Mammary epithelial cell (primary cell): ENCODE measurements at regions of chr12 and their contacts with region 1.

Region 1: GRCh38 chr12:110431957-110432587 is 18.1 kb downstream of the ARPC3 start:
- DNase-seq: no peak
- H3K4me3 ChIP-seq: no peak overlapping the region
- H3K27ac ChIP-seq: no peak overlapping the region
- H3K4me1 ChIP-seq: no peaks in the 10 kb centered on the region
- H3K27me3 ChIP-seq: no peaks in the 10 kb centered on the region
- CTCF ChIP-seq: no peak

Region 2: DNA sequence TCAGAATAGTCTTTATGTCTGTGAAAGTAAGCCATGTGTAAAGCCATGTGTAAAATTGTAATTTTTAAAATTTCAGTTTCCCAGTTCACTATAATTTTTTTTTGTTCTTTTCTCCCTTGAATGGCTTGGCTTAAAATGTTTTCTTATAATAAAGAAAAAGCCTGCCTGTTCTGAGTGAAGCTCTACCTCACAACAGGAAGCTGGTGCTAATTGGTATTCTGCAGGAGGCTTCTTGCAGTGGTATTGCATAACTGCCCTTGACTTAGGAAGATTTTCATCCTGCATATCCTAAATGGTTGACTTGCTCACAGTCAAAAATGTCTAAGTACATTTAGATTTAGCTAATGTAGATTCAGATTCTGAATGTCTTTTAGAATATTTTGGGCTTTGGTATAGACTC is 101.5 kb before region 1 on chr12:
- CTCF ChIA-PET with region 1: interaction called, 18 read pairs
- dilution Hi-C with region 1: no loop called
- in situ Hi-C with region 1: no loop called
- intact Hi-C with region 1: no loop called
- DNase-seq: peak; percentile 30
- H3K4me3 ChIP-seq: no peak overlapping the region
- H3K27ac ChIP-seq: no peak overlapping the region
- H3K4me1 ChIP-seq: peaks cover 6% of the 10 kb centered on the region
- H3K27me3 ChIP-seq: no peaks in the 10 kb centered on the region
- CTCF ChIP-seq: no peak

Region 3: DNA sequence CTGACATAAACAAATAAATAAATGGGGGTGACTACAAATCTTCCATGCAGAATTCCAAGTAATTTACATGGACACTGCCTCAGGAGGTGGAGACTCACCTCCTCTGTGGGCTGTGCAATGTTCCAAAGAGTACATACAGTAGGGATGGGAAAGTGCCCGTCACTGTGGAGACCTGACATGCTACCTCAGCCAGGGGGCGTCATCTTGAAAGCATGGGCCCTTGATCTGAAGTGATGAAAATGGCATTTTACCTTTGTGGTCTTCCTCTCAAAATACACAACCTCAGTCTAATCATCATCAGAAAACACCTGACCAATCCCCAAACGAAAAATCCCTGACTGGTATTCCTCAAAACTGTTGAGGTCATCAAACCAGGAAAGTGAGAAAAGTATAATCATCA is 77.0 kb before region 1 on chr12:
- CTCF ChIA-PET with region 1: no interaction called
- dilution Hi-C with region 1: no loop called
- in situ Hi-C with region 1: no loop called
- intact Hi-C with region 1: loop called (anchors 5 kb)
- DNase-seq: no peak
- H3K4me3 ChIP-seq: no peak overlapping the region
- H3K27ac ChIP-seq: no peak overlapping the region
- H3K4me1 ChIP-seq: peaks cover 3% of the 10 kb centered on the region
- H3K27me3 ChIP-seq: no peaks in the 10 kb centered on the region
- CTCF ChIP-seq: peak; percentile 14 to 53

Region 4: GRCh38 chr12:110403146-110403975 is 28.7 kb before region 1 on chr12 and contains the start of gene ANAPC7:
- CTCF ChIA-PET with region 1: interaction called, 25 read pairs
- dilution Hi-C with region 1: no loop called
- in situ Hi-C with region 1: no loop called
- intact Hi-C with region 1: no loop called
- DNase-seq: peak; percentile 85
- H3K4me3 ChIP-seq: peak within 1 kb of the TSS; percentile 86 to 95 (median 89)
- H3K27ac ChIP-seq: peak within 1 kb of the TSS; percentile 98
- H3K4me1 ChIP-seq: peaks cover 7% of the 10 kb centered on the region
- H3K27me3 ChIP-seq: no peaks in the 10 kb centered on the region
- CTCF ChIP-seq: peak in 1 of 2 donors; percentile 14
- total RNA-seq, gene ANAPC7: 35.8 to 63.7 TPM